OCI-LY7 (cell line): ENCODE measurements at regions of chr4 and their contacts with region 1.

Region 1: GRCh38 chr4:24686871-24687680 is 102.7 kb upstream of the DHX15 start:
- DNase-seq: peak; percentile 11
- H3K4me3 ChIP-seq: no peak overlapping the region
- H3K27ac ChIP-seq: no peak overlapping the region
- H3K4me1 ChIP-seq: no peaks in the 10 kb centered on the region
- CTCF ChIP-seq: peak; percentile 82

Region 2: GRCh38 chr4:24226023-24226422 is 461.1 kb before region 1 on chr4:
- CTCF ChIA-PET with region 1: no interaction called
- POLR2A ChIA-PET with region 1: no interaction called
- intact Hi-C with region 1: no loop called
- DNase-seq: no peak
- H3K4me3 ChIP-seq: no peak overlapping the region
- H3K27ac ChIP-seq: no peak overlapping the region
- H3K4me1 ChIP-seq: no peaks in the 10 kb centered on the region
- CTCF ChIP-seq: no peak

Region 3: GRCh38 chr4:24488399-24489164 is 198.5 kb before region 1 on chr4:
- CTCF ChIA-PET with region 1: no interaction called
- POLR2A ChIA-PET with region 1: interaction called, 7 read pairs
- intact Hi-C with region 1: loop called (anchors 1 kb)
- DNase-seq: peak; percentile 62
- H3K4me3 ChIP-seq: no peak overlapping the region
- H3K27ac ChIP-seq: no peak overlapping the region
- H3K4me1 ChIP-seq: no peaks in the 10 kb centered on the region
- CTCF ChIP-seq: peak; percentile 95